Activated naive CD4-positive, alpha-beta T cell treated with anti-CD3 and anti-CD28 coated beads for 36 hours (primary cell): ENCODE measurements at regions of chr9 and their contacts with region 1.

Region 1: GRCh38 chr9:4662108-4662988 is at the start of gene PLPP6:
- DNase-seq: peak; percentile 91
- H3K4me3 Mint-ChIP-seq: peak within 1 kb of the TSS; percentile 87
- H3K27ac Mint-ChIP-seq: peak within 1 kb of the TSS; percentile 77
- H3K4me1 Mint-ChIP-seq: peaks cover 52% of the 10 kb centered on the region
- H3K27me3 Mint-ChIP-seq: no peaks in the 10 kb centered on the region
- total RNA-seq, gene PLPP6: 4.6 to 5.3 TPM

Region 2: DNA sequence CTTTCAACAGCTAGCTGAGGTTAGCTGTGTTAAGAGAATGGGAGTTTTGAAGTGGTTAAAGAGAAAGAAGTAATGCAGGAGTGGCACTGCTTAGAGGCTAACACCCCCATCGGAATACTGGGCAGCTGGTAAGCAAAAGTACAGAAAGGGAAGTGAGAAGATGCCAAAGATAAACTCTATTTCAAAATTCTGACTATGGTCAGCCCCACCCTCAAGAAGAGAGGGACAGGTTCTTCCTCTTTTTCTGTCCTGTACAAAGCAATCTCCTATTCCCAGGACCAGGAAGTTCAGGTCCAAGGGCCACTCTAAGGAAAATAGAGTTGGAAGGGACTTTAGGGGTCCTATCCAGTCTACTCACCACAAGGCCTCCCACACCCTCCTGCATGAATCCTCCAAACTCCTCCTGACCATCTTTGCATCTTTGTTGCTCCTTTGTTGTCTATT is 276.8 kb after region 1 on chr9:
- CTCF ChIA-PET with region 1: no interaction called
- intact Hi-C with region 1: loop called (anchors 5 kb)
- DNase-seq: no peak
- H3K4me3 Mint-ChIP-seq: no peak overlapping the region
- H3K27ac Mint-ChIP-seq: peak overlapping the region; percentile 88
- H3K4me1 Mint-ChIP-seq: peaks cover 79% of the 10 kb centered on the region
- H3K27me3 Mint-ChIP-seq: no peaks in the 10 kb centered on the region

Region 3: GRCh38 chr9:5843794-5844504 is 1181.6 kb after region 1 on chr9:
- CTCF ChIA-PET with region 1: no interaction called
- intact Hi-C with region 1: loop called (anchors 10 kb)
- DNase-seq: peak; percentile 39
- H3K4me3 Mint-ChIP-seq: peak overlapping the region; percentile 33
- H3K27ac Mint-ChIP-seq: peak overlapping the region; percentile 74
- H3K4me1 Mint-ChIP-seq: peaks cover 57% of the 10 kb centered on the region
- H3K27me3 Mint-ChIP-seq: no peaks in the 10 kb centered on the region